ENCODE measurements at regions of chr17 and their contacts with region 1.

Region 1: DNA sequence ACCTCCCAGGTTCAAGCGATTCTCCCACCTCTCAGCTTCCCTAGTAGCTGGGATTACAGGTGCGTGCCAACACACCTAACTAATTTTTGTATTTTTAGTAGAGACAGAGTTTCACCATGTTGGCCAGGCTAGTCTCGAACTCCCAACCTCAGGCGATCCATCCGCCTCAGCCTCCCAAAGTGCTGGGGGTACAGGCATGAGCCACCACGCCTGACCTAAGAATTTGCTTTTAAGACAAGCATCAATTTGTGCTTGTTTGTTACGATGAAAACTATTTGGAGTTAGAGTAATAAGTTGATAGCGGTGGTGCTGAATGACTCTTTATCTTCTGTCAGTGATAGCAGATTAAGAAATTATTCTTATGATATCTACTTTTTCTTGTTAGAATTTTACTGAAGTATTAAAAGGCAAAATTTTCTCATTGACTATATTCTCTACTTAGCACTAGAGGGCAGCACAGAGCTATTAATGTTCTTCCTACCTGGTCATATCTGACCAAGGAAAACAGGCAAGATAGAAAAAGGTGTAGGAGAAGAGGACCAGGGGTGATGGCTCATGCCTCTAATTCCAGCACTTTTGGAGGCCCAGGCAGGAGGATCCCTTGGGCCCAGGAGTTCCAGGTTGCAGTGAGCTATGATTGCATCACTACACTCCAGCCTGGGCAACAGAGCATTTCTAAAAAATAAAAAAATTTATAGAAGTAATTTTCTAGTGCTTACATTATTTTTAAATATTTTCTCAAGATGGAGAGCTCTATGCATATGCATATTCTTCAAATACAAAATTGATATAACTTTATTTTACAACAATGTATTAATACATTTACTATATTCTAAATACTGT is 24.5 kb downstream of the STXBP4 start:
- DNase-seq: peak; percentile 75
- H3K4me3 ChIP-seq: no peak overlapping the region
- H3K27ac ChIP-seq: no peak overlapping the region
- H3K4me1 ChIP-seq: no peaks in the 10 kb centered on the region
- CTCF ChIP-seq: peak; percentile 86

Region 2: GRCh38 chr17:55117164-55117563 is 124.1 kb after region 1 on chr17:
- CTCF ChIA-PET with region 1: no interaction called
- POLR2A ChIA-PET with region 1: no interaction called
- intact Hi-C with region 1: no loop called
- DNase-seq: no peak
- H3K4me3 ChIP-seq: no peak overlapping the region
- H3K27ac ChIP-seq: no peak overlapping the region
- H3K4me1 ChIP-seq: no peaks in the 10 kb centered on the region
- CTCF ChIP-seq: no peak

Region 3: GRCh38 chr17:55177159-55177854 is 184.3 kb after region 1 on chr17:
- CTCF ChIA-PET with region 1: no interaction called
- POLR2A ChIA-PET with region 1: no interaction called
- intact Hi-C with region 1: loop called (anchors 5 kb)
- DNase-seq: peak; percentile 59
- H3K4me3 ChIP-seq: no peak overlapping the region
- H3K27ac ChIP-seq: peak overlapping the region; percentile 67
- H3K4me1 ChIP-seq: peaks cover 41% of the 10 kb centered on the region
- CTCF ChIP-seq: peak; percentile 79

Region 4: GRCh38 chr17:55198690-55199370 is 205.8 kb after region 1 on chr17:
- CTCF ChIA-PET with region 1: no interaction called
- POLR2A ChIA-PET with region 1: no interaction called
- intact Hi-C with region 1: no loop called
- DNase-seq: no peak
- H3K4me3 ChIP-seq: no peak overlapping the region
- H3K27ac ChIP-seq: no peak overlapping the region
- H3K4me1 ChIP-seq: peaks cover 15% of the 10 kb centered on the region
- CTCF ChIP-seq: no peak

Region 5: GRCh38 chr17:55295411-55296170 is 302.6 kb after region 1 on chr17:
- CTCF ChIA-PET with region 1: no interaction called
- POLR2A ChIA-PET with region 1: interaction called, 3 read pairs
- intact Hi-C with region 1: loop called (anchors 1 kb)
- DNase-seq: peak; percentile 67
- H3K4me3 ChIP-seq: no peak overlapping the region
- H3K27ac ChIP-seq: no peak overlapping the region
- H3K4me1 ChIP-seq: peaks cover 4% of the 10 kb centered on the region
- CTCF ChIP-seq: peak; percentile 91

Region 6: DNA sequence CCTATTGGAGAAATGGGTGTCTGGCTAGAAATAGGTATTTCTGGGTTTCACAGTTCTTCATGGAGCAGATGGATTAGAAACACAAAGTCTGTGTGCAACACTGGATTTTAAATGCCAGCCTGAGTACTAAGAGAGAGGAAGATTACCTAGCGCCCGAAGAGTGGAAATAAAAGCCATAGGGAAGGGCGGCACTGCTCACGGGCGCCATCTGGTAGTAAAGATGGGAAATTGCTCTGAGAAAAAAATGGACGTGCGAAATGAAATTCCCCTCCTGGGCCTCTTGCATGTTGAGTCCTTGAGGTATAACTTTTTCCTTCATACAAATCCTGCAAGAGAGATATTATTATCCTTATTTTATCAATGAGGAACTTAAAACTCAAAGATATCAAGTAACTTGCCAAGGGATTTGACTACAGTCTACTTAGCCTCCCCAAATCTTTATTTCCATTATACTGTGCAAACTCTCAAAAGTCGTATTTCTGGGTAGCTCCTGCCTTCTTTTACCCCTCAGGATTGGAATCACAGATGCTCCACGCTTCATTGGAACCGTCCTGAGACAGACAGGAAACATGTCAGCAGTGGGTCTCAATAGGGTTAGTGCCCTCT is 355.8 kb after region 1 on chr17:
- CTCF ChIA-PET with region 1: no interaction called
- POLR2A ChIA-PET with region 1: interaction called, 3 read pairs
- intact Hi-C with region 1: loop called (anchors 1 kb)
- DNase-seq: peak; percentile 63
- H3K4me3 ChIP-seq: no peak overlapping the region
- H3K27ac ChIP-seq: no peak overlapping the region
- H3K4me1 ChIP-seq: no peaks in the 10 kb centered on the region
- CTCF ChIP-seq: peak; percentile 96